ENCODE measurements at regions of chr4 and their contacts with region 1.

Region 1: DNA sequence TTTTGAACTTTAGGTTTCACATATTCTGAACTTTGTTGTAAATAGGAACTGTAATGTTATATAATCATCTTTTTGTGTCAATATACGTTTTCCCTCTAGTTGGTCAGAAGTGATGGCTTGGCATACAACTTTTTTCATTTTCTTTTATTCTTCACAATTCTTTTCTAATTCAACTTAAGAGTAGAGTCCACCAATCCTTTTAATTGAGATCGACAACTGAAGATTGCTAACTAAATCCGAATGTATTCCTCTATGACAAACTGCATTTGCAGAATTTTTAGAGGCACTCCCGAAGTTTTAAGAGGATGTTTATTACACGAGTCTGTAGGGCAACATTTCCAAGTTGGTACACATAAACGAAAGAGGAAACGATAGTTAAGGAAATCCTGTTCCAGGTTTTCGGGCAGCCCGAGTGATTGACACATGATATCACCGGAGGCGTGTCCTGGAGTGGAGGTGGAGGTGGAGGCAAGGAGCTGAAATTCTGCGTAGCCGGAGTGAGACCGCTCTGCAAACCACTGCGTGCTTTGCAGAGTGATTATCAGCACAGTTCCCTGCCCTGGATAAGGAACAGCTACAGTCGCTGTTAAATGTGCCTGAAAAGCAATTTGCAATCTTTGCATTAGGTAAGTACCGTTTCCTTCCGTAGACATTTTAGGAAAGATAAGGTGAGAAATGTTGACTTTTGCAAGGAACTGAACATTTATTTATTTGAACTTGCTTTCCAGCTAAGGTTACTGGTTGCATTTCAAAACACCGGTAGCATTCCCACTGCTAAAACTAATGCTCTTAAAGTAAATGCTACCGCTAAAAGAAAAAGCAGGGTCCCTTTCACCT is at the start of gene SPRY1:
- DNase-seq: peak; percentile 95
- H3K4me3 Mint-ChIP-seq: peak within 1 kb of the TSS; percentile 89
- H3K27ac Mint-ChIP-seq: peak within 1 kb of the TSS; percentile 71
- H3K4me1 Mint-ChIP-seq: peaks cover 10% of the 10 kb centered on the region
- H3K27me3 Mint-ChIP-seq: no peaks in the 10 kb centered on the region
- CTCF ChIP-seq: no peak
- total RNA-seq, gene SPRY1: 4.3 and 5.6 TPM in 2 replicates

Region 2: DNA sequence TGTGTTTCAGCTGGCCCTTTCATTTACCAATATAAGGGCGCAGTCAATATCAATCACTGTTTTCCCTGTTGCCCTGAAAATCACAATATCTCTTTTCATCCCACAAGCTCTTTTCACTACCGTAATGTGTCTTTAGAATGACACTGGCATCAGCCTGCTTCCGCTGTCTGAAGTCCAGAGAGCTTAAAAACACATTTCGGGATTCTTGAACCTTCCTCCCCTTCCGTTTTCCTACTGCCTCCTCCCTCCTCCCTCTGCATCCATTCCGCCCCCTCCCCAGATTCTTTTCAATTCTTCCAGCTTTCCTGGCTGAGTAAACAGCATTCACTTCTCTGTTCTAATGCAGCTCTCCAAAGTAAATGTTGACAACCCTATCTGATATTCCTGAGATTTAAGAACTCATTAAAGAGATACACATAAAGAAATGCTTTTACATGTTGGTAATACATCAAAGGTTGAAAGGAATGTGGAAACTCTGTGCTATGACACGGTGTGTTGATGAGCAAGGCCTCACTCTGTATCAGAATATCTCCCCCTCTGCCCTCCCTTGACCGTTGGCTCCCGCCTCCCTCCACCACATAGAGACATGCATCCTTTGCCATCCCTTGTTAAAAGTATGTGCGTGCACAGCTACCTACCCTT is 83.5 kb before region 1 on chr4:
- CTCF ChIA-PET with region 1: no interaction called
- POLR2A ChIA-PET with region 1: no interaction called
- intact Hi-C with region 1: no loop called
- DNase-seq: no peak
- H3K4me3 Mint-ChIP-seq: no peak overlapping the region
- H3K27ac Mint-ChIP-seq: no peak overlapping the region
- H3K4me1 Mint-ChIP-seq: no peaks in the 10 kb centered on the region
- H3K27me3 Mint-ChIP-seq: no peaks in the 10 kb centered on the region
- CTCF ChIP-seq: no peak

Region 3: GRCh38 chr4:123350191-123350544 is 46.4 kb before region 1 on chr4:
- CTCF ChIA-PET with region 1: interaction called, 7 read pairs
- POLR2A ChIA-PET with region 1: interaction called, 36 read pairs
- intact Hi-C with region 1: loop called (anchors 5 kb)
- DNase-seq: peak; percentile 73
- H3K4me3 Mint-ChIP-seq: no peak overlapping the region
- H3K27ac Mint-ChIP-seq: no peak overlapping the region
- H3K4me1 Mint-ChIP-seq: peaks cover 23% of the 10 kb centered on the region
- H3K27me3 Mint-ChIP-seq: no peaks in the 10 kb centered on the region
- CTCF ChIP-seq: peak; percentile 35

Region 4: DNA sequence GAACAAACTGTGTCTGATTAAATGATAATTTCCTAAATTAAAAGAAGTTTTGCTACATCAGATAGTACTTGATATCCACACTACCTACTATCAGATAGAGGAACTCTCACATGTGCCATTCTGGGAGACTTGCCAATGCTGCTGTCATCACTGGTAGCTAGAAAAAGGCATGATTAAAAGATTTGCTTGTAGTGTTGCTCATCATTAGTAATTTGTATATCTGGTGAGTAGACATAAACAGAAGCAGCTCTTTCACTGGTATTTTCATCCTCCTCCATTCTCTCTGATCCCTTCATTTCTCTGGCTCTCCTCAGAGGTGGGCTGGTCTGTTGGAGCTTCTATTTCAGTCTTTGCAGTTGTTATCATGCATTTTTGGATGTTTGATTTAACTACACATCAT is 56.1 kb after region 1 on chr4:
- CTCF ChIA-PET with region 1: no interaction called
- POLR2A ChIA-PET with region 1: interaction called, 3 read pairs
- intact Hi-C with region 1: loop called (anchors 2 kb)
- DNase-seq: peak; percentile 80
- H3K4me3 Mint-ChIP-seq: no peak overlapping the region
- H3K27ac Mint-ChIP-seq: no peak overlapping the region
- H3K4me1 Mint-ChIP-seq: peaks cover 9% of the 10 kb centered on the region
- H3K27me3 Mint-ChIP-seq: no peaks in the 10 kb centered on the region
- CTCF ChIP-seq: no peak

Region 5: DNA sequence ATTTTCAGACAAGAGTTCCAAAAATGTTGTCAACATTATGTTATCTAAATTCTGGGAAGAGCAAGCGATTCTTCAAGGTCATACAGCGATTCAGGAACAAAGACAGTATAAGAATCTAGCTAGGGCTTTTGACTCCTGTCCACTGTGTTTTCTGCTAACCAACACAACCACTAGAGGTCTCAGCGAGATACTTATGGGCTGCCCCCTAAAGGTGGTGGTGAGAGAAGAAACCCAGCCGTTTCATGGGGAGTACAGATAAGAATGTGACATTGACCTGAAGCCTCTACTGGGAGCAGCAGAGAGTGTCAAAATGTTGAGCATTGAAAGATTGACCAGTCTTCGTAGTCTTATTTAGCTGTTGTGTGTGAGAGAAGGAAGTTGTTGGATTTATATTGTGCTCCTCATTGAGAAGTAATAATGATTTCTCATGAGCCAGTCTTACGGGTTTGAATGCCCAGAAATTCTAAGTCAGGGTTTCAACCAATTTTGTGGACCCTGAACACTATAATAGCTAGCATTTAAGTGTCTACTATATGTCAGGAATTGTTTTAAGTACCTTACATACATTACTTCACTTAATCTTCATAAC is 168.3 kb after region 1 on chr4:
- CTCF ChIA-PET with region 1: interaction called, 7 read pairs
- POLR2A ChIA-PET with region 1: interaction called, 4 read pairs
- intact Hi-C with region 1: loop called (anchors 2 kb)
- DNase-seq: peak; percentile 86
- H3K4me3 Mint-ChIP-seq: no peak overlapping the region
- H3K27ac Mint-ChIP-seq: no peak overlapping the region
- H3K4me1 Mint-ChIP-seq: peaks cover 7% of the 10 kb centered on the region
- H3K27me3 Mint-ChIP-seq: no peaks in the 10 kb centered on the region
- CTCF ChIP-seq: peak; percentile 55

Region 6: GRCh38 chr4:123661080-123661737 is 264.7 kb after region 1 on chr4:
- CTCF ChIA-PET with region 1: interaction called, 17 read pairs
- POLR2A ChIA-PET with region 1: interaction called, 9 read pairs
- intact Hi-C with region 1: loop called (anchors 1 kb)
- DNase-seq: peak; percentile 39
- H3K4me3 Mint-ChIP-seq: no peak overlapping the region
- H3K27ac Mint-ChIP-seq: no peak overlapping the region
- H3K4me1 Mint-ChIP-seq: no peaks in the 10 kb centered on the region
- H3K27me3 Mint-ChIP-seq: no peaks in the 10 kb centered on the region
- CTCF ChIP-seq: peak; percentile 46